HEK293T (cell line): ENCODE measurements at regions of chr1 and their contacts with region 1.

Region 1: GRCh38 chr1:115609021-115609420 is 32.7 kb upstream of the VANGL1 start:
- DNase-seq: no peak

Region 2: GRCh38 chr1:115595279-115596079 is 13.5 kb before region 1 on chr1:
- CTCF ChIA-PET with region 1: interaction called, 11 read pairs
- POLR2A ChIA-PET with region 1: no interaction called
- DNase-seq: peak; percentile 87

Region 3: DNA sequence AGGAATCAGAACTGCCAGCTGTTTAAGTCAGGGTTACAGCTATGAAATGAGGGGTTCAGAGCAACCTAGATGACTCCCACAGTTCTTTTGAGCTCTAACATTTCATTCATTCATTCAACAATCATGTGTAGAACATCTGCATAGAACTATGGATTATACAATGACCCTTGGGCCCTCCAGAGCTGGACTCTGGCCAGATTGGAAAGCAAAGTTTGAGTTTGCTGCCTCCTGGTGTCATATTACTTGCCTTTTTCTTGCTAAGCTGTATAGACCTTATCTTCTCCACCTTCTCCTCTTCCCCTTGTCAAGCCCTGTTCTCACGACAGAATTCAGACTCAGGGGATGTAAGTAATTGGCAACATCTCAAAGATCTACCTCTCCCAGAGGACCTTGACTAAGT is 155.5 kb after region 1 on chr1:
- CTCF ChIA-PET with region 1: interaction called, 17 read pairs
- POLR2A ChIA-PET with region 1: no interaction called
- DNase-seq: peak; percentile 40

Region 4: DNA sequence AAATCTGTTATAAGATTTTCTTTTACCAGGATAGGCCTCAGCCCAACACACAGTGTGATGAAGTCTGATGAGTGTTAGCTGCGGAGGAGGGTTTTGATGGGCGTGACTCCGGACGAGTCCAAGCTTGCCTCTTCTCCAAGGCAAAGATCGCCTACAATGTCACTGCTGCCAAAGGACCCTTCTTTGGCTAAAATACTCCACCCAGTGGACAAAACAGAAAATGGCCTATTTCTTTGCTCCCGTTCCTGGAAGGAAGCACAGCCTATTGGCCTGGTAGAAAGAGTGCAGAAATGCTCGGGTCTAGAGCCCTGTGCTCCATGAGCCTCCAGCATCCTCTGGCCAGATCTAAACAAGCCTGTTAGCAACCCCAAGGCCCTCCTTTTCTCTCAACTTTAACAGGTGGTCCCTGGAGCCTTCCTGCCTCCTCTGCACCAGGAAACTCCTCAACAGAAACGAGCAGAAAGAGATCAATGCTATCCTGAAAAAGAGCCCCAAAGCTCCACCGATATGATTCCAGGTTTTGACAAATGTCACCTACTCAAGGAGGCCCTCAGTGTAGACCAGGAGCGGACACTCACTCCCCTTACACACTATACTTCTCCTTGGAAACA is 162.9 kb after region 1 on chr1:
- CTCF ChIA-PET with region 1: interaction called, 18 read pairs
- POLR2A ChIA-PET with region 1: interaction called, 3 read pairs
- DNase-seq: peak; percentile 85